PC-9 (cell line): ENCODE measurements at regions of chr1 and their contacts with region 1.

Region 1: GRCh38 chr1:75472089-75472970 is 138.6 kb downstream of the SLC44A5 start:
- DNase-seq: no peak
- H3K4me3 ChIP-seq: no peak overlapping the region
- H3K27ac ChIP-seq: no peak overlapping the region
- H3K4me1 ChIP-seq: no peaks in the 10 kb centered on the region
- H3K27me3 ChIP-seq: no peaks in the 10 kb centered on the region
- CTCF ChIP-seq: no peak

Region 2: GRCh38 chr1:75506976-75507375 is 34.6 kb after region 1 on chr1:
- CTCF ChIA-PET with region 1: no interaction called
- POLR2A ChIA-PET with region 1: interaction called, 44 read pairs
- intact Hi-C with region 1: no loop called
- DNase-seq: no peak
- H3K4me3 ChIP-seq: no peak overlapping the region
- H3K27ac ChIP-seq: no peak overlapping the region
- H3K4me1 ChIP-seq: no peaks in the 10 kb centered on the region
- H3K27me3 ChIP-seq: no peaks in the 10 kb centered on the region
- CTCF ChIP-seq: no peak